Mammary epithelial cell (primary cell): ENCODE measurements at regions of chr22 and their contacts with region 1.

Region 1: DNA sequence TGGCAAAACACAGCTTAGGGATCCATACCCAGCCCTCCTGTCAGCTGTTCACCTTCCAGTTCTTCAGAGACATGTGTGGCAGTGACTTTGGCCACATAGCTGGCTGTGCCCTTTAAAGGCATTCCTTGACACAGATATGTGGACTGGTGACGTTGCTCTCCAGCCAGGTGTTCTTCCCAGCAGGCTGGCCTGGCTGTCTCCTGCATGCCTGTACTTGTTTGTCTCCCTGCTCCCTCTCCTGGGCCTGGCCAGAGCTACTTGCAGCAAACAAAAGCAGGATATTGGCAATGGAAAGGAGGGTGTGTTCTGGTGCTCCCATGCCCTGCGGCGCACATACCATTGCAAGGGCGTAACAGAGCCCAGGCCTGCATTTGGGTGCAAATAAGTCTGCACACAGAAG is 38.3 kb downstream of the PIK3IP1 start:
- DNase-seq: peak; percentile 98
- H3K4me3 ChIP-seq: peak overlapping the region in 1 of 3 experiments; percentile 15
- H3K27ac ChIP-seq: peak overlapping the region; percentile 74
- H3K4me1 ChIP-seq: peaks cover 53% of the 10 kb centered on the region
- H3K27me3 ChIP-seq: no peaks in the 10 kb centered on the region
- CTCF ChIP-seq: peak in 1 of 2 donors; percentile 49

Region 2: GRCh38 chr22:31179356-31179755 is 74.6 kb before region 1 on chr22:
- CTCF ChIA-PET with region 1: no interaction called
- dilution Hi-C with region 1: no loop called
- in situ Hi-C with region 1: no loop called
- intact Hi-C with region 1: loop called (anchors 5 kb)
- DNase-seq: peak; percentile 67
- H3K4me3 ChIP-seq: no peak overlapping the region
- H3K27ac ChIP-seq: peak overlapping the region; percentile 1
- H3K4me1 ChIP-seq: peaks cover 35% of the 10 kb centered on the region
- H3K27me3 ChIP-seq: no peaks in the 10 kb centered on the region
- CTCF ChIP-seq: no peak

Region 3: GRCh38 chr22:31230871-31231621 is 22.9 kb before region 1 on chr22:
- CTCF ChIA-PET with region 1: no interaction called
- dilution Hi-C with region 1: no loop called
- in situ Hi-C with region 1: no loop called
- intact Hi-C with region 1: no loop called
- DNase-seq: peak; percentile 16
- H3K4me3 ChIP-seq: no peak overlapping the region
- H3K27ac ChIP-seq: no peak overlapping the region
- H3K4me1 ChIP-seq: peaks cover 3% of the 10 kb centered on the region
- H3K27me3 ChIP-seq: no peaks in the 10 kb centered on the region
- CTCF ChIP-seq: peak; percentile 43 to 77

Region 4: DNA sequence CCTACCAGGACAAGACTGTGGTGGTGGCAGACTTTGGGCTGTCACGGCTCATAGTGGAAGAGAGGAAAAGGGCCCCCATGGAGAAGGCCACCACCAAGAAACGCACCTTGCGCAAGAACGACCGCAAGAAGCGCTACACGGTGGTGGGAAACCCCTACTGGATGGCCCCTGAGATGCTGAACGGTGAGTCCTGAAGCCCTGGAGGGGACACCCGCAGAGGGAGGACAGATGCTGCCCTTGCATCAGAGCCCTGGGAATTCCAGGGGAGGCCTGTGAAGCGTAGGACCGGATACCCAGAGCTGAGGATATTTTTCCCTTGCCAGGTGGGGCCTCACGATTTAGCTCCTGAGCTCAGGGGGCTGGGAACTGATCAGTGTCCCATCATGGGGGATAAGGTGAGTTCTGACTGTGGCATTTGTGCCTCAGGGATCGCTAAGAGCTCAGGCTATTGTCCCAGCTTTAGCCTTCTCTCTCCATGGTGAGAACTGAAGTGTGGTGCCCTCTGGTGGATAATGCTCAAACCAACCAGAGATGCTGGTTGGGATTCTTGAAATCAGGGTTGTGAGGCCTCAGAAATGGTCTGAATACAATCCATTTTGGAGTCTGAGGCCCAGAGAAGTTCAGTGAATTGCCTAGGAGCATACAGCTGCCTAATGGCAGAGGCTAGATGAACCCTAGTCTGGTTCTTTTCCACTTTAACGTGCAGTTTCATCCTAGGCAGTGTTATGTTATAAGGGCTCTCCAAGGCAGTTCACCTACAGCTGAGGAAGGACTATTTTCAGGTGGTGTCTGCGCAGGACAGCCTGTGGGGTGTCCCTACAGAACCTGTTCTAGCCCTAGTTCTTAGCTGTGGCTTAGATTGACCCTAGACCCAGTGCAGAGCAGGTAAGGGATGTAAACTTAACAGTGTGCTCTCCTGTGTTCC is 18.8 kb after region 1 on chr22:
- CTCF ChIA-PET with region 1: interaction called, 8 read pairs
- dilution Hi-C with region 1: no loop called
- in situ Hi-C with region 1: no loop called
- intact Hi-C with region 1: loop called (anchors 2 kb)
- DNase-seq: peak; percentile 47
- H3K4me3 ChIP-seq: no peak overlapping the region
- H3K27ac ChIP-seq: no peak overlapping the region
- H3K4me1 ChIP-seq: no peaks in the 10 kb centered on the region
- H3K27me3 ChIP-seq: no peaks in the 10 kb centered on the region
- CTCF ChIP-seq: peak; percentile 62 to 76